Activated B cell treated with CpG ODN at 0.5 μM for 24 hours (primary cell): ENCODE measurements at regions of chr7 and their contacts with region 1.

Region 1: GRCh38 chr7:2680792-2681490 is 7.1 kb upstream of the AMZ1 start:
- DNase-seq: peak; percentile 55
- ATAC-seq: peak; percentile 73
- H3K4me3 Mint-ChIP-seq: no peak overlapping the region
- H3K27ac Mint-ChIP-seq: no peak overlapping the region
- H3K4me1 Mint-ChIP-seq: no peaks in the 10 kb centered on the region
- H3K27me3 Mint-ChIP-seq: peaks cover 2% of the 10 kb centered on the region
- CTCF ChIP-seq: no peak

Region 2: GRCh38 chr7:2567679-2568278 is 113.2 kb before region 1 on chr7:
- CTCF ChIA-PET with region 1: no interaction called
- POLR2A ChIA-PET with region 1: no interaction called
- intact Hi-C with region 1: loop called (anchors 1 kb)
- DNase-seq: no peak
- ATAC-seq: peak; percentile 58
- H3K4me3 Mint-ChIP-seq: no peak overlapping the region
- H3K27ac Mint-ChIP-seq: no peak overlapping the region
- H3K4me1 Mint-ChIP-seq: peaks cover 18% of the 10 kb centered on the region
- H3K27me3 Mint-ChIP-seq: no peaks in the 10 kb centered on the region
- CTCF ChIP-seq: no peak

Region 3: GRCh38 chr7:2641406-2642393 is 39.2 kb before region 1 on chr7:
- CTCF ChIA-PET with region 1: no interaction called
- POLR2A ChIA-PET with region 1: no interaction called
- intact Hi-C with region 1: no loop called
- DNase-seq: peak; percentile 66
- ATAC-seq: peak; percentile 59
- H3K4me3 Mint-ChIP-seq: peak overlapping the region; percentile 68
- H3K27ac Mint-ChIP-seq: peak overlapping the region; percentile 80
- H3K4me1 Mint-ChIP-seq: peaks cover 67% of the 10 kb centered on the region
- H3K27me3 Mint-ChIP-seq: no peaks in the 10 kb centered on the region
- CTCF ChIP-seq: no peak

Region 4: DNA sequence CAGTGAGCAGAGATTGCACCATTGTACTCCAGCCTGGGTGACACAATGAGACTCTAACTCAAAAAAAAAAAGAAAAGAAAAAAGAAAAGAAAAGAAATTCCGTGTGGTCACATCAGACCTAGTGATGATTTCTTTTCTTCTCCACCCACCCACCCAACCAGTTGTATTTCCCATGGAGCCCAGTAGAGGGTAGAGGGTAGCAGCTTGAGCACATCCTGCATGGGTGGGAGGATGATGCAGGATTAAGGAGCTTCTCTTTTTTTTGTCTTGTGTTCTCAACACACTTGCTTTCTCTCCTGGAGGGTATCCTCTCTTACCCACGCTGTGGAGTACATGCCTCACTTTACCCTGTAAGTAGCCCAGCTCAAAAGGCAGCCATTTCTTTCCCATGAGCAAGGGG is 481.3 kb after region 1 on chr7:
- CTCF ChIA-PET with region 1: no interaction called
- POLR2A ChIA-PET with region 1: no interaction called
- intact Hi-C with region 1: no loop called
- DNase-seq: no peak
- ATAC-seq: peak; percentile 21
- H3K4me3 Mint-ChIP-seq: no peak overlapping the region
- H3K27ac Mint-ChIP-seq: no peak overlapping the region
- H3K4me1 Mint-ChIP-seq: peaks cover 2% of the 10 kb centered on the region
- H3K27me3 Mint-ChIP-seq: peaks cover 8% of the 10 kb centered on the region
- CTCF ChIP-seq: no peak